ENCODE measurements at regions of chr9 and their contacts with region 1.

Region 1: DNA sequence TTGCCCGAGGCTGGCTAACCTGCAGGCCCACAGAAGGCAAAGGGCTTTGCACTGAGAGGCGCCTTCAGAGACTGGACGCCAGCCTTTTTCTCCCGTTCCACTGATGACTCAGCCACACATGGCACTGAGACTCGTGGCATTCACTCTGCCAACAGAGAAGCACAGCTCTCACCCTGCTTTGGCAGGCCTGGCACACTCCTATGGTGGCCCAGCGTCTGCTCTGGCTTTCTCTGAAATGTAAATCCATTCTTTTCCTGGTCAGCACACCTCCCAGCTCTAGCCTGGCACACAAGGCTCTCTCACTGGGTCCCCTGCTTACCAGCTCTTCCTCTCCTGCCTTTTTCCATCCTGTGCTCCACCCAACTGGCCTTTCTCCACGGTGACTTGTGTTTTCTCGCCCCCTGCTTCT is 5.9 kb upstream of the MELK start:
- DNase-seq: peak in 1 of 2 donors; percentile 47
- ATAC-seq: peak; percentile 79 to 94 (median 92)
- H3K4me3 ChIP-seq: no peak overlapping the region
- H3K27ac ChIP-seq: peak overlapping the region; percentile 48
- H3K4me1 ChIP-seq: no peaks in the 10 kb centered on the region
- H3K27me3 ChIP-seq: no peaks in the 10 kb centered on the region
- CTCF ChIP-seq: no peak

Region 2: DNA sequence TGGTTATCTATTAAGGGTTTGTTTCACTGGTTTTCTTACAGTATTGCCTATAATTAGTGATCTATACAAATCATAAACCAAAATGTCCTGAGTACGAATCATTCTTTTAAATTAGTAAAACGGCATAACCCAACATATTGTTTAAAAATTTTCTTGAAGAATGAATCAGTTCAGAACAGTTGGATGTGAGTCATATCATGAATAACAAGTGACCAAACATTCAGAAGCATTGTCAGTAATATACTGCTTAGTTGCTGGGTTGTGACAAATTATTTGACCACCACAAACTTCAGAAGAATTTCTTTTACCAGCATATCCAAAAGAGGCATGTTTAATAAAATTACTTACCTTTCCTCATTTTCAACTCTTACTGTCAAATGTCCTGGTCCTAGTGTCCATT is 1293.8 kb before region 1 on chr9:
- intact Hi-C with region 1: no loop called
- DNase-seq: no peak
- ATAC-seq: no peak
- H3K4me3 ChIP-seq: no peak overlapping the region
- H3K27ac ChIP-seq: no peak overlapping the region
- H3K4me1 ChIP-seq: peaks cover 17% of the 10 kb centered on the region
- H3K27me3 ChIP-seq: no peaks in the 10 kb centered on the region
- CTCF ChIP-seq: no peak

Region 3: GRCh38 chr9:36487482-36488388 is 79.1 kb before region 1 on chr9:
- intact Hi-C with region 1: loop called in 1 of 2 experiments (anchors 5 kb)
- DNase-seq: peak; percentile 94 to 95
- ATAC-seq: peak; percentile 96 to 98 (median 98)
- H3K4me3 ChIP-seq: peak overlapping the region; percentile 99
- H3K27ac ChIP-seq: peak overlapping the region; percentile 86
- H3K4me1 ChIP-seq: peaks cover 24% of the 10 kb centered on the region
- H3K27me3 ChIP-seq: no peaks in the 10 kb centered on the region
- CTCF ChIP-seq: peak; percentile 3

Measured in psoas muscle (tissue), 8 donors.